ENCODE measurements at regions of chr9 and their contacts with region 1.

Region 1: GRCh38 chr9:77456829-77457437 is 191.2 kb downstream of the GNA14 start:
- DNase-seq: peak; percentile 93
- H3K4me3 Mint-ChIP-seq: no peak overlapping the region
- H3K27ac Mint-ChIP-seq: no peak overlapping the region
- H3K4me1 Mint-ChIP-seq: peaks cover 24% of the 10 kb centered on the region
- H3K27me3 Mint-ChIP-seq: no peaks in the 10 kb centered on the region

Region 2: GRCh38 chr9:77163884-77164283 is 293.0 kb before region 1 on chr9:
- CTCF ChIA-PET with region 1: interaction called, 13 read pairs
- intact Hi-C with region 1: loop called (anchors 1 kb)
- DNase-seq: no peak
- H3K4me3 Mint-ChIP-seq: no peak overlapping the region
- H3K27ac Mint-ChIP-seq: no peak overlapping the region
- H3K4me1 Mint-ChIP-seq: peaks cover 2% of the 10 kb centered on the region
- H3K27me3 Mint-ChIP-seq: peaks cover 5% of the 10 kb centered on the region

Region 3: DNA sequence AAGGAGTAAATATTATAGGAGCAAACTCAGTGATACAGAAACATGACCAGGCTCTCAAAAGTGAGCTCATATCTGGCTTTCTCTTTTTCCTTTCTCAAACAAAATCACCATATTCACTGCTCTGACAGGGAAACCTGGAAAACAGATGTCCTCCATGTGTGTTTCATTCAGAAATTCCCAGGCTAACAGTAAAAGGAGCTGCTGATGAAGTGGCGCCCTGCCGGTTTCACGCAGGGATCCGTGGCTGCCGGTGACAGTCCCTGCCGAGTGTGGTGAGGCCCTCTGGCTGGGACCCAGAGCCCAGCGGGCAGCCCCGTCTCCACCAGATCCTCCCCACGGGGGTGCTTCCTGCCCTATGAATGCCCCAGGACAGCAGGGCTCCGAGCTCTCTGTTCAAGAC is 16.9 kb before region 1 on chr9:
- CTCF ChIA-PET with region 1: interaction called, 59 read pairs
- intact Hi-C with region 1: no loop called
- DNase-seq: no peak
- H3K4me3 Mint-ChIP-seq: no peak overlapping the region
- H3K27ac Mint-ChIP-seq: no peak overlapping the region
- H3K4me1 Mint-ChIP-seq: no peaks in the 10 kb centered on the region
- H3K27me3 Mint-ChIP-seq: no peaks in the 10 kb centered on the region

Region 4: DNA sequence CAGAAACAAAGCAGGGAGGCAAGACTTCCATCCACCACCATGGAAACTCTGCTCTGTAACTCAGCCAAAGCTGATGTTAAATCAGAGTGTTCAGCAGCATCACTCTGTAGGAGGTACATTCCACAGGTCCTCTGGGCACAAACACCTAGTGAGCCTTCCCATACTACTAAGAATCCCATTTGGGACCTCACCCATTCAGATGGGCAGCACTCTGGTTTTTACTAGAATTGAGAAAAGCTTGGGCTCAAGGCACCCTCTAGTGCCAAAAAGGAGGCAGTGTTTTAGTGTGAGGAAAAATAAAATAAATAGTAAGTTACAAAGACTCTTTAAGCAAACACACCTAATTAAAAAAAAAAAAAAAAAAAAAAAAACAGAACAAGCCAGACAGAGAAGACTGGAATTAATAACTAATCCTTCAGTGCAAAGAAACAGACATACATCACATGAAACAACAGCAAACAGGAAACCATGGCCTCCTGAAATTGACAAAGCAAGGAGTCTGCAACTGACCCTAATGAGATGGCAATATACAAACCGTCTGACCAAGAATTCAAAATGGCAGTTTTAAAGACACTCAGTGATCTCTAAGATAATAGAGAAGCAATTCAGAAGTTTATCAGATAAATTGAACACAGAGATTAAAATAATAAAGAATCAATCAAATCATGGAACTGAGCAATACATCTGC is 31.6 kb after region 1 on chr9:
- CTCF ChIA-PET with region 1: interaction called, 84 read pairs
- intact Hi-C with region 1: loop called (anchors 1 kb)
- DNase-seq: peak; percentile 12
- H3K4me3 Mint-ChIP-seq: no peak overlapping the region
- H3K27ac Mint-ChIP-seq: no peak overlapping the region
- H3K4me1 Mint-ChIP-seq: peaks cover 11% of the 10 kb centered on the region
- H3K27me3 Mint-ChIP-seq: no peaks in the 10 kb centered on the region

Region 5: GRCh38 chr9:77751341-77752091 is 294.6 kb after region 1 on chr9:
- CTCF ChIA-PET with region 1: interaction called, 28 read pairs
- intact Hi-C with region 1: loop called (anchors 1 kb)
- DNase-seq: peak; percentile 26
- H3K4me3 Mint-ChIP-seq: no peak overlapping the region
- H3K27ac Mint-ChIP-seq: no peak overlapping the region
- H3K4me1 Mint-ChIP-seq: peaks cover 34% of the 10 kb centered on the region
- H3K27me3 Mint-ChIP-seq: no peaks in the 10 kb centered on the region

Region 6: DNA sequence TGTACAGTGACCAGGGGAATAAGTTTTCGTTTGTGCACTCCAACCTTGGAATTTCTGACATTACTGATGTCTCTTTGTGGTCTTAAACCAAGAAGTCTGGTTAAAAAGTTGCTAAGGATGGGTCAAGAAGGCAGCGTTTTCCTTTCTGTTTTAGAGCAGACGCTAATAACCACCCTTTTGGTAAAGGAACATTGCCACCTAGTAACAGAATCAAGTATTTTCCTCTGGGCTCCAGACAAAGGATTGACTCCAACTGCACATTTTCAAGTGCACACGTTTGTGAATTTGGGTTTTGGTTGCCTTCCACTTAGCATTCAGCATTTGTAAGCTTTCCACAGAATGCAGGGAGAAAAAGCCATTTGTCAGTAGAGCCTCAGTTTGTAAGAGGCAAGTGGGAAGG is 756.8 kb after region 1 on chr9:
- CTCF ChIA-PET with region 1: interaction called, 3 read pairs
- intact Hi-C with region 1: loop called (anchors 2 kb)
- DNase-seq: no peak
- H3K4me3 Mint-ChIP-seq: no peak overlapping the region
- H3K27ac Mint-ChIP-seq: no peak overlapping the region
- H3K4me1 Mint-ChIP-seq: peaks cover 31% of the 10 kb centered on the region
- H3K27me3 Mint-ChIP-seq: no peaks in the 10 kb centered on the region